Ovary (tissue), 10 donors: ENCODE measurements at regions of chr20 and their contacts with region 1.

Region 1: GRCh38 chr20:44747166-44748004 is 1.7 kb downstream of the KCNK15 start:
- DNase-seq: peak; percentile 73 to 86 (median 81)
- H3K4me3 ChIP-seq: no peak overlapping the region
- H3K27ac ChIP-seq: no peak overlapping the region
- H3K4me1 ChIP-seq: no peaks in the 10 kb centered on the region
- H3K27me3 ChIP-seq: no peaks in the 10 kb centered on the region
- CTCF ChIP-seq: peak; percentile 60 to 70 (median 68)
- EP300 ChIP-seq: no peak
- POLR2A ChIP-seq: no peak

Region 2: DNA sequence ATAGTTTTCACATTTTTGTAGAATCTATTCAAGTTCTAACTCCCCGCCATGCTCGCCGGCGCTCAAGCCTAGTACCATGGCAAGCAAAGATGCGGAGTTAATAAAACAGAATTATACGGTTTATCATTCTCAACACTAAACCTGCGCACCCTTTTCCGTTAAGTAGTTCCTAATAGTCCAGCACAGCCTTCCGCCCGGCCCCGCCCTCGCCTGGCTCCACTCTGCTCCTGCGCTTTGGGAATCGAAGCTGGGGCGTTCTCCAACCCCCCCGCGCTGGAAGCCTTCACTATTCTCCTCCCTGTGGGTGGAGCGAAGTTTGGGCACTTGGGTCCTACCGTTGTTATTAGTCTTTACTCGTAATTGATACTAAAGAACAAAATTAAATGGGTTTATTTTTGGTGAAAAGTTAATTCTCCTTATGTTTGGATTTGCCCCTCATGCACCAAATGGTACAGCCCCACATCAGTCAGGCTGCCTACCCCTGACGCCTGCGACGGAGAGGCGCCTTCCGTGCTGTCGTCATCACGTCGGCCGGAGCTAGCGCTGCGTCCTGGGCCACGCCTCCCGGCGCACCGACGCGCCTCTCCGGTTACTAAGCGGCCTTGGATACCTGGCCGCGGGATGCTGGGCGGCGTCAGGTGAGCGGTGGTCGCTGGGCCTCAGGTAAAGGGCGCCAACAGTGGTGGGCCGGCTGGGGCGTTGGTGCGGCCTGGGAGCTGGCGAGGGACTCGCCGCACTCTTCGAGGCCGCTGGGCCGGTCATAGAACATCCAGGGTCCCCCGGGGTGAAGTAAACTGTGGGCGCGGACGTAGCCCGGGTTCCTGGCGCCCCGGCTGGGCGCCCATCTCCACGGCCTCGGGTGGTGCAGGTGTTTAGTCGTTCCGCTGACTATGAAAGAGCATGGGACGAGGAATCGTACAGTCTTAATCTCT is 1156.7 kb before region 1 on chr20 and contains the start of gene IFT52:
- intact Hi-C with region 1: loop called in 1 of 4 experiments (anchors 10 kb)
- DNase-seq: peak; percentile 90 to 94 (median 93)
- H3K4me3 ChIP-seq: peak within 1 kb of the TSS; percentile 94
- H3K27ac ChIP-seq: peak within 1 kb of the TSS; percentile 26 to 66
- H3K4me1 ChIP-seq: no peaks in the 10 kb centered on the region
- H3K27me3 ChIP-seq: no peaks in the 10 kb centered on the region
- CTCF ChIP-seq: peak in 1 of 3 donors; percentile 9
- EP300 ChIP-seq: no peak
- POLR2A ChIP-seq: peak; percentile 60
- total RNA-seq, gene IFT52: 32.7 to 53.7 (median 45.7) TPM

Region 3: DNA sequence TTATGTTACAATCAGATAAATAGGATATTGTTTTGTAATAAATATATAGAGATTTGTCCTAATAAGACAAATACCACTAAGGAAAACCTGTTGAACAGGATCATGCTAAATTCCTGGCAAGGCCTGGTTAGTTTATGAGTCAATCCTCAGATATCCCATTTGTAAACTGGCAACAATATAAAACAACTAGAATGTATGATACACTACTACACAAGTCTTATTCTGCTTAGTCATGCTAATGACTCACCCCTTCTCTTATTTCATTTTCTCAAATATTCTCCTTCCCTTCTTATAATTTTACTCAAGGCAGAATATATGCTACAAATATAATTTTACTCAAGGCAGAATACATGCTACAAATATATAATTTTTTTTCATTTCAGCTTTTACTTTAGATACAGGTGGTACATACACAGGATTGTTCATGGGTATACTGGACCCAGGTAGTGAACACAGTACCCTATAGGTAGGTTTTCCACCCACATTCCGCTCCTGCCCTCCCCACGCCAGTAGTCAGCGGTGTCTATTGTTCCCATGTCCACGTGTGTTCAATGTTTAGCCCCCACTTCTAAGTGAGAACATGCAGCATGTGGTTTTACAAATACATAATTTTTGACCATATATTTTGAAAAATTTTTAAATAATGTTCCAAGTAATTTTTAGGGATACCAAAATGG is 543.1 kb before region 1 on chr20:
- intact Hi-C with region 1: no loop called
- DNase-seq: no peak
- H3K4me3 ChIP-seq: no peak overlapping the region
- H3K27ac ChIP-seq: no peak overlapping the region
- H3K4me1 ChIP-seq: peaks cover 5% of the 10 kb centered on the region
- H3K27me3 ChIP-seq: no peaks in the 10 kb centered on the region
- CTCF ChIP-seq: no peak
- EP300 ChIP-seq: no peak
- POLR2A ChIP-seq: no peak

Region 4: DNA sequence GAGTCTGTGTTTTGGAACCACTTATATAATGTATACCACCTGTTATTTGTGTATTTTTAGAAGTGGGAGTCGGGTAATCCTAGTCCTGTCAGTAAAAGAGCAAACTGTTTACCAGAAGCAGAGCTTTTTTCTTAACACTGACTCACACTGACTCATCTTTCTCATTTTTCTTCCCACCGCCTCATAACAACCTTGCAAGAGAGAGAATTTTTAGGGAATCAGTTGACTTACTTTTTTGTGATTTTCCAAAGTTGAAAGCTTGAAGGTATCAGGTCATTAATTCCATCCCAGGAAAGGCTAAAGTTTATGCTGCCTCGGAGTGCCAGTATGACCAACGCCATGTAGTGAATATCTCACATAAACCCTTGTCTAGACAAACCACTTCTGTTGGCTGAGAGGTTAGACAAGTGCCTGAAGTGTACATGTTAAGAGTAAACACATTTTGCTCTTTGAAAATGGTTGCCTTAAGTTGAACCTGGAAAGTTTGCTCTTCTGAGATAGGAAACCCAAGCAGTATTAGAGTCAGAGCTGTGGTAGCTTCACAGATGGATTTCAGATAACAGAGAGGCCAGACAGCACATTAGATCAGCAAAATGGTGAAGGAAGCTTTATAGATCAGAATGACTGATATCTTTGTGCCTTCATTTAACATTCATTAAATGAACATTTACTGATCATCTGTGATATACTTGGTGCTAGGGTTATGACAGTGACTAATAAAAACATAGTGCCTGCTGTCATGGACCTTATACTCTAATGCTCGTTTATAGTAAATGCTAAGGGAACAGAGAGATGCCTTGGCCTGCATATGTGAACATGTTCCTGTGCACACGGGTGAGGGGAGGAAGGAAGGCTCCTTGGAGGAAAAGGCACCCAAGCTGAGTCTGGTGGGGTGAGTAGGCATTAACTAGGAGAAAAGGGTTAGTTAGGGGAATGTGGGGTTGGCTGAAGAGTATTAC is 194.2 kb before region 1 on chr20:
- intact Hi-C with region 1: no loop called
- DNase-seq: no peak
- H3K4me3 ChIP-seq: no peak overlapping the region
- H3K27ac ChIP-seq: peak overlapping the region in 1 of 2 donors; percentile 64
- H3K4me1 ChIP-seq: peaks cover 14% of the 10 kb centered on the region
- H3K27me3 ChIP-seq: no peaks in the 10 kb centered on the region
- CTCF ChIP-seq: no peak
- EP300 ChIP-seq: no peak
- POLR2A ChIP-seq: no peak

Region 5: GRCh38 chr20:44861531-44862006 is 114.2 kb after region 1 on chr20:
- intact Hi-C with region 1: loop called (anchors 2 to 5 kb)
- DNase-seq: peak in 3 of 5 donors; percentile 37 to 49 (median 48)
- H3K4me3 ChIP-seq: no peak overlapping the region
- H3K27ac ChIP-seq: peak overlapping the region in 1 of 2 donors; percentile 17
- H3K4me1 ChIP-seq: peaks cover 4% of the 10 kb centered on the region
- H3K27me3 ChIP-seq: no peaks in the 10 kb centered on the region
- CTCF ChIP-seq: no peak
- EP300 ChIP-seq: no peak
- POLR2A ChIP-seq: no peak

Region 6: GRCh38 chr20:44866703-44867335 is 119.4 kb after region 1 on chr20:
- intact Hi-C with region 1: loop called (anchors 2 to 5 kb)
- DNase-seq: no peak
- H3K4me3 ChIP-seq: no peak overlapping the region
- H3K27ac ChIP-seq: no peak overlapping the region
- H3K4me1 ChIP-seq: peaks cover 4% of the 10 kb centered on the region
- H3K27me3 ChIP-seq: no peaks in the 10 kb centered on the region
- CTCF ChIP-seq: no peak
- EP300 ChIP-seq: no peak
- POLR2A ChIP-seq: no peak

Region 7: DNA sequence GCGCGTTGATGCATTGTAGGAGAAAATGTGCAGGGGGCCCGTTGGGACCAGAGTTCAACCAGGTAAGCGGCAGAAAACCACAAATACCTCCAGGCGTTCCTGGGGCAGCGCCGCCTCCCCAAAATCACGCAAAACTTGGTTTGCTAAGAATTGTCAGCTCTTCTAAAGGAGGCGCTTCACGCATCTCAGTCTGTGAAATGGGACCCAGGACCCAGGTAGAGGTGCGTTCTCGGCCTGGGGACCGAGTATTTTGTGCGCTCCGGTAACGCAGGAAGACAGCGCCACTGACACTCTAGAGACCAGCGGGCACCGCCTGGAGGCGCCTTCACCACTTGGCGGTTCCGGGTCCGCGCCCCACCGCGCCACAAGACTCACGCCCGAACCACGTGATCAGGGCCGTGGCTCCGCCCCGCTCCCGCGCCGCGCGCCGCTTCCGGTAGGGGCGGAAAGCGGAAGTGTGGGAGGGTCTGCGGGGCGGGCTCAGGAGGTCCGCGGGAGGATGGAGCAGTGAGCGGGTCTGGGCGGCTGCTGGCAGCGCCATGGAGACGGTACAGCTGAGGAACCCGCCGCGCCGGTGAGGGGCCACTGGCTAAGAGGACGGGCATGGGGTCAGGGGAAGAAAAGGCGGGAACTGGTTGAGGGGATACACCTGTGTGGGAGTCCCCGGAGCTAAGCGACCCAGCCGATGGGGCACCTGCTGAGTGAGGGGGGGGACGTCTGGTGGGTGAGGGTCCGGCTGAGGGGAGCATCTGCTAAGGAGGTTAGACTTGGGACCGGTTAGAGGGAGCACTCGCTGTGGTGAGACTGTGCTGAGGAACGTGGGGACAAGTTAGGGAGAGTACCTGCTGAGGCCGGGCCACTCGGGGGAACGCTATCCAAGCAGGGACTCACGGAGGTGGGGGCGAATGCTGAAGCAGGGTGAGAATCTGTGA is 218.9 kb after region 1 on chr20 and contains the start of gene STK4:
- intact Hi-C with region 1: loop called in 2 of 4 experiments (anchors 10 kb)
- DNase-seq: peak; percentile 91 to 96 (median 92)
- H3K4me3 ChIP-seq: peak within 1 kb of the TSS; percentile 87
- H3K27ac ChIP-seq: peak within 1 kb of the TSS; percentile 24 to 51
- H3K4me1 ChIP-seq: peaks cover 7% of the 10 kb centered on the region
- H3K27me3 ChIP-seq: no peaks in the 10 kb centered on the region
- CTCF ChIP-seq: peak in 2 of 3 donors; percentile 58 to 66
- EP300 ChIP-seq: no peak
- POLR2A ChIP-seq: peak; percentile 81
- total RNA-seq, gene STK4: 17.3 to 27.5 (median 19.6) TPM